HEK293 (cell line): ENCODE measurements at regions of chr3 and their contacts with region 1.

Region 1: GRCh38 chr3:194344012-194344411 is 7.1 kb downstream of the CPN2 start:
- H3K4me3 ChIP-seq: no peak overlapping the region
- H3K27ac ChIP-seq: no peak overlapping the region
- H3K4me1 ChIP-seq: no peaks in the 10 kb centered on the region
- CTCF ChIP-seq: no peak

Region 2: DNA sequence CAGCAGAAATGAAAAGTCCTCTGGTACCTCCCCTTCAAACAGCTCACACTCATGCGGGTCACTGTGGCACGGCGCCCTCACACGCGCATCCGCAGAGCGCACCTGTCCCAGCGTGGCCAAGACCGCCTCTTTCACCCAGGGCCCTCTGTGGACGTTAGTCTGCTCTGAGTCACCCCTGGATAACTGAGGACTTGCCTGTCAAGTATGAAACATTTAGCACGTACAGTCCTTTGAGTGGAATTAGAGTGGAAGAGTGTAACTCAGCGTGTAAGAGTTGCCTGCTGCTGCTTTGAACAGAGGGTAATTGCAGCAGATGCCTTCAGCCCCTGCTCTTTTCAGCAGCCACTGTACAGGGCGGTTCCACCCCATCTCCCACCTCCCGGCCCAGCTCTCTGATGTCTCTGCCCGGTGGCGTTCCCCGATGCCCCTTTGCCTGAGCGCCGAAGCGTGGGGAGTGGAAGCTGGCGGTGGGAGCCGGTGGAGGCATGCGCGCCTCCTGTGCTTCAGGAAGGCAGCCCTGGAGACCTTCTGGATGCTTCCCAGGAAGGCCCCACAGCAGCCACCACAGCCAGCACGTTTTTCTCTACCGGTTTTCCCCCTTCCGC is 15.9 kb before region 1 on chr3:
- CTCF ChIA-PET with region 1: interaction called, 10 read pairs
- POLR2A ChIA-PET with region 1: no interaction called
- H3K4me3 ChIP-seq: no peak overlapping the region
- H3K27ac ChIP-seq: no peak overlapping the region
- H3K4me1 ChIP-seq: no peaks in the 10 kb centered on the region
- CTCF ChIP-seq: no peak

Region 3: GRCh38 chr3:194404365-194405140 is 60.5 kb after region 1 on chr3:
- CTCF ChIA-PET with region 1: interaction called, 20 read pairs
- POLR2A ChIA-PET with region 1: no interaction called
- H3K4me3 ChIP-seq: no peak overlapping the region
- H3K27ac ChIP-seq: no peak overlapping the region
- H3K4me1 ChIP-seq: no peaks in the 10 kb centered on the region
- CTCF ChIP-seq: no peak; the same call in 1 of the 2 replicates